CD14-positive monocyte (primary cell): ENCODE measurements at regions of chr17 and their contacts with region 1.

Region 1: GRCh38 chr17:2157675-2158395 is 102.9 kb downstream of the HIC1 start:
- DNase-seq: peak; percentile 85 to 98 (median 95)
- H3K4me3 ChIP-seq: peak overlapping the region in 2 of 3 experiments; percentile 15 to 53
- H3K4me3 Mint-ChIP-seq: peak overlapping the region; percentile 48 to 67
- H3K27ac ChIP-seq: peak overlapping the region; percentile 64 to 95
- H3K27ac Mint-ChIP-seq: peak overlapping the region; percentile 92 to 99 (median 95)
- H3K4me1 ChIP-seq: peaks cover 38 to 42% of the 10 kb centered on the region in 2 donors
- H3K4me1 Mint-ChIP-seq: peaks cover 42% of the 10 kb centered on the region
- H3K27me3 ChIP-seq: no peaks in the 10 kb centered on the region
- H3K27me3 Mint-ChIP-seq: peaks cover 0 to 2% (median 2%) of the 10 kb centered on the region in 3 donors
- CTCF ChIP-seq: no peak

Region 2: DNA sequence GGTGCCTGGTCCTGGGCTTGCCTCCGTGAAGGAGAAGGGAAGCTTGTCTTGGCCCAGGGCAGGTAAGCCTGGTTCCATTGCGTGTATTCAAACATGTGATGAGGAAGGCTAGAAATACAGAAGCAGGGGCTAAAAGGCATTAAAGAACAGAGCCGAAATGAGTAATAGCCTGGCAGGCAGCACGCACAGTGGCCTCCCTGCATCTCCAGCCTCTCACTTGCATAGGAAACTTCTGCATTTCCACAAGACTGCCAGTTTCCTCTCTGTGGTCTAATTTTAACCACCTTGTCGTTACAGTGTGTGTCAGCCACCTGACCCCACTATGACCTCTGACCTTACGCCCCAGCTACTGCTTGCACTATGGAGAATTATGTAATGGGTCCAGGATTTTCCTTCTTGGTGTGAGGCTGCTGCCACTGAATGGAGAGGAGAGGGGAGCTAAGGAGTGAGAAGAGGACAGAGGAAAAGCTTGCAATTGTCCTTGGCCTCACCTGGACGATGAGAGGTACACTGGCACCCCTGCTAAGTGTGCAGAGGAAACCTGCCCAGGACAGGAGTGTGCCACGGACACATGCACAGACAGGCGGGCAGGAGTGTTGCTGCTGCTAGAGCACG is 70.1 kb before region 1 on chr17:
- intact Hi-C with region 1: loop called in 1 of 2 experiments (anchors 5 kb)
- DNase-seq: peak; percentile 96 to 99 (median 98)
- H3K4me3 ChIP-seq: peak overlapping the region in 1 of 3 experiments; percentile 74
- H3K4me3 Mint-ChIP-seq: peak overlapping the region; percentile 58 to 76
- H3K27ac ChIP-seq: peak overlapping the region; percentile 78 to 83
- H3K27ac Mint-ChIP-seq: peak overlapping the region; percentile 60 to 93 (median 89)
- H3K4me1 ChIP-seq: peaks cover 78 to 84% of the 10 kb centered on the region in 2 donors
- H3K4me1 Mint-ChIP-seq: peaks cover 82% of the 10 kb centered on the region
- H3K27me3 ChIP-seq: peaks cover 0 to 6% of the 10 kb centered on the region in 2 donors
- H3K27me3 Mint-ChIP-seq: peaks cover 11 to 35% (median 35%) of the 10 kb centered on the region in 3 donors
- CTCF ChIP-seq: no peak

Region 3: DNA sequence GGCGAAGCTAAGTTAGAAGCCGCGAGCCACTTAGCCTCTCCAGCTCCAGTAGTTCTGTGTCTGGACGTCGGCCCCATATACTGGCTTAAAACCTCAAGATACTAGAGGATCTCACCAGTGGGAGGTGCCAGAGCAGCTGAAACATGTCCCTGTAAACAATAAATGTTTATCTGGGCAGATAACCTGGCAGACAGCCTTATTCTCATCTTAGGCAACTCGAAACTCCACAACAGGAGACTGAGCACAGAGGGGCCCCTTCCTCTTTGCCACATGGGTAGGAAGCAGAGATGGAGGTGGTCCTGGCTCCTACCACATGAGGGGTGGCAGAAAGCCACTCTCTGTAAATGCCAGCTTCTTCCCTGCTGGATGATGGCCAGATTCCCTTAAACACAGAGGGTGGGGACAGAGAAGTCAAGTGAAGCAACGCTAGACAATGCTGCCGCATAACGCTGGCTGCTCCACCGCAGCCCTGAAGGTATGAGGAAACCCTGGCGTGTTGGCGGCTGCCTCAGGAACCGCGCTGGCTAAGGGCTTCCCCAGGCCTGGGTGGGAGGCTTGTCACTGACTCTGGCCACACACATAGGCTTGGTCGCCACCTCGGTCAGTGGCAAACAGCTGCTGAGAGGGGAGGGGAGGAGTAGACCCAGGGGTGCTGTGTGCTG is 35.1 kb before region 1 on chr17:
- intact Hi-C with region 1: loop called (anchors 2 to 5 kb)
- DNase-seq: peak; percentile 88 to 95 (median 91)
- H3K4me3 ChIP-seq: peak overlapping the region in 1 of 3 experiments; percentile 59
- H3K4me3 Mint-ChIP-seq: peak overlapping the region; percentile 59 to 92
- H3K27ac ChIP-seq: peak overlapping the region; percentile 57 to 85
- H3K27ac Mint-ChIP-seq: peak overlapping the region; percentile 71 to 95 (median 94)
- H3K4me1 ChIP-seq: peaks cover 52 to 54% of the 10 kb centered on the region in 2 donors
- H3K4me1 Mint-ChIP-seq: peaks cover 50% of the 10 kb centered on the region
- H3K27me3 ChIP-seq: no peaks in the 10 kb centered on the region
- H3K27me3 Mint-ChIP-seq: no peaks in the 10 kb centered on the region
- CTCF ChIP-seq: no peak

Region 4: GRCh38 chr17:2244545-2245525 is 87.0 kb after region 1 on chr17:
- intact Hi-C with region 1: loop called in 1 of 2 experiments (anchors 5 kb)
- DNase-seq: peak; percentile 68 to 79 (median 77)
- H3K4me3 ChIP-seq: no peak overlapping the region
- H3K4me3 Mint-ChIP-seq: no peak overlapping the region
- H3K27ac ChIP-seq: no peak overlapping the region
- H3K27ac Mint-ChIP-seq: no peak overlapping the region
- H3K4me1 ChIP-seq: no peaks in the 10 kb centered on the region
- H3K4me1 Mint-ChIP-seq: no peaks in the 10 kb centered on the region
- H3K27me3 ChIP-seq: no peaks in the 10 kb centered on the region
- H3K27me3 Mint-ChIP-seq: no peaks in the 10 kb centered on the region
- CTCF ChIP-seq: peak; percentile 93